ENCODE measurements at regions of chr1 and their contacts with region 1.

Region 1: DNA sequence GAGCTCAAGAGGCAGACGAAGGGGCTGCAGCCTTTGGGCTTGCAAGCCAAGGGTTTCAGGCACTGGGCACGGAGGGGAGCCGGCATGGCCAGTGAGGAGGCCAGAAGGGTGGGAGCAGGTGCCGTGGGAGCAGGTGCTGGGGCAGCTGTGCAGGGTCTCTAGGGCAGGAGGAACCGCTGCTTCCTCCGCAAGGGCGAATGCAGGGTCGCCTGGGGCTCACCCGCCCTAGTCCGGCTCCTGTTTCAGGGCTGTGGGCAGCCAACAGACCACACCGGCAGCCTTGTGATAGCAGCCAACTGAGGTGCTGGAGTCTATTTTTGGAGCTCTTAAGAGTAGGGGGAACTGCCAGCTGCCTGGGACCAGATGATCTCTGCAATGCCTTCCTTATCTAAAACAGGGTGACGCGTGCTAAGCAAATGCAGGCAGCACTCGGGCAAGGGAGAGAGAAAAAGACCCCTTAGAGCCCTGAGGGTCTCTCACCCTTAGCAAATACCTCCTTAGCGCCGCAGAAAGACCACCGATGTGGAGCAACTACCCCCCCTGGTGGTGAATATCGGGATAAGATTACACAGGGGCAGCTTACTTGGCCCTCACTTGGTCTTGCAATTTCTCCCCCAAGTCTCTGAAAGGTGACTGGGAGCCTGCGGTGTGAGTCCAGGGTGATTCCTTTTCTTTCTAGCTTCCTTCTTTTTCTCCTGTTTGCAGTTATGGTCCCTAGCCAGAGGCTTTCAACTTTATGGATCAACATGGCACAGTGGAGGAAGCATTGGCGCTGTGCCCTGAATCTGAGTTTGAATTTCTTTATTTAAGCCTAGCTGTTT is 20.7 kb upstream of the MAPKAPK2 start:
- DNase-seq: peak; percentile 79
- ATAC-seq: peak; percentile 81
- H3K4me3 Mint-ChIP-seq: no peak overlapping the region
- H3K27ac Mint-ChIP-seq: no peak overlapping the region
- H3K4me1 Mint-ChIP-seq: peaks cover 28% of the 10 kb centered on the region
- H3K27me3 Mint-ChIP-seq: peaks cover 32% of the 10 kb centered on the region

Region 2: GRCh38 chr1:206479183-206480125 is 184.6 kb before region 1 on chr1:
- CTCF ChIA-PET with region 1: interaction called, 33 read pairs
- DNase-seq: peak; percentile 80
- ATAC-seq: peak; percentile 72
- H3K4me3 Mint-ChIP-seq: no peak overlapping the region
- H3K27ac Mint-ChIP-seq: peak overlapping the region; percentile 61
- H3K4me1 Mint-ChIP-seq: peaks cover 17% of the 10 kb centered on the region
- H3K27me3 Mint-ChIP-seq: no peaks in the 10 kb centered on the region

Region 3: DNA sequence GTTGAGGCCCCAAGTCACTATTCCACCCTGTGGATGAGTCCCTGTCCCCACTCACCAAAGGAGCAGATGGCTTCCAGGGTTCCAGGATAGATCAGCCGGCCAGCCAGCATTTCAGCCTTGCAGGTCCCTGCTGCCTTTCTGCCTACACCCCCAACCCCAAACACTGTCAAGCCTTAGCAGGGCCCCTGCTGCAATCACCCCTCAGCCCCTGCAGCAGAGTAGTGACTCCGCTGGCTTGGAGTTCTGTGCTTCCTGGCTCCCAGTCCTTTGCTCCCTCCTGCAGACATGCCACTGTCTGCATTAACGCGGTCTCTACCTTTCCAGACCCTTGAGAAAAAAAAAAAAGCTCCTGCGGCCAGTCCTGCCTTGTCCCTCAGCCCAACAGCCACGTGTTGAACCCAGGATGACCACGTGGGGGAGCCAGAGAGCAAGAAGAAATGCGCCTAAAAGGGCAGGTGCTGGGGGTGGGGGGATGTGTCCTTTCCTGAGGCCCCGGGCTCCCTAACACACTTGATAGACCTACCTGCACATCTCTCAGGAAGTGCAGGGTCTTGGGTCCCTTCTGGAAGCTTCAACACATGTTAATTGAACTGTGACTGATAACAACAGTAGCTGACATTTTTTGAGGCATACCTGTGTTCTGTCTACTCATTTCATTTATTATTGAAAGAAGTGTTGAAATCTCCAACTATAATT is 119.3 kb before region 1 on chr1:
- CTCF ChIA-PET with region 1: interaction called, 30 read pairs
- DNase-seq: peak; percentile 86
- ATAC-seq: peak; percentile 92
- H3K4me3 Mint-ChIP-seq: no peak overlapping the region
- H3K27ac Mint-ChIP-seq: peak overlapping the region; percentile 28
- H3K4me1 Mint-ChIP-seq: peaks cover 13% of the 10 kb centered on the region
- H3K27me3 Mint-ChIP-seq: no peaks in the 10 kb centered on the region

Region 4: DNA sequence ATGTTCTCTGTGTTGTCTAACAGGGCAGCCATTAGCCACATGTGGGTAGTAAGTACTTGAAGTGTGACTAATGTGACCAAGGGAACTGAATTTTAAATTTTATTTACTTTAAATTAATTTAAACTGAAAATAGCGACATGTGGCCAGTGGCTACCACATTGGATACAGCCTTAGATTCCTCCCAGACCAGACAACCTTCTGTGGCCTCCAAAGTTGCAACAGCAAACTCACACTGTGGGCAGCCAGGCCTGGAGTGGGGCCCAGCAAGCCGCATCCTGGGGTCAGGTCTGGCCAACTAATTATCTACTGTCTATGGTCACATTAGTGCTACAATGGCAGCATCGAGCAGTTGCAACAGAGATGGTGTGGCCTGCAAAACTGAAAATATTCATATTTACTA is 63.5 kb before region 1 on chr1:
- CTCF ChIA-PET with region 1: interaction called, 11 read pairs
- DNase-seq: no peak
- ATAC-seq: no peak
- H3K4me3 Mint-ChIP-seq: no peak overlapping the region
- H3K27ac Mint-ChIP-seq: no peak overlapping the region
- H3K4me1 Mint-ChIP-seq: peaks cover 1% of the 10 kb centered on the region
- H3K27me3 Mint-ChIP-seq: no peaks in the 10 kb centered on the region

Region 5: GRCh38 chr1:206674745-206675175 is 10.7 kb after region 1 on chr1:
- CTCF ChIA-PET with region 1: interaction called, 134 read pairs
- DNase-seq: no peak
- ATAC-seq: no peak
- H3K4me3 Mint-ChIP-seq: no peak overlapping the region
- H3K27ac Mint-ChIP-seq: no peak overlapping the region
- H3K4me1 Mint-ChIP-seq: peaks cover 8% of the 10 kb centered on the region
- H3K27me3 Mint-ChIP-seq: peaks cover 7% of the 10 kb centered on the region

Region 6: DNA sequence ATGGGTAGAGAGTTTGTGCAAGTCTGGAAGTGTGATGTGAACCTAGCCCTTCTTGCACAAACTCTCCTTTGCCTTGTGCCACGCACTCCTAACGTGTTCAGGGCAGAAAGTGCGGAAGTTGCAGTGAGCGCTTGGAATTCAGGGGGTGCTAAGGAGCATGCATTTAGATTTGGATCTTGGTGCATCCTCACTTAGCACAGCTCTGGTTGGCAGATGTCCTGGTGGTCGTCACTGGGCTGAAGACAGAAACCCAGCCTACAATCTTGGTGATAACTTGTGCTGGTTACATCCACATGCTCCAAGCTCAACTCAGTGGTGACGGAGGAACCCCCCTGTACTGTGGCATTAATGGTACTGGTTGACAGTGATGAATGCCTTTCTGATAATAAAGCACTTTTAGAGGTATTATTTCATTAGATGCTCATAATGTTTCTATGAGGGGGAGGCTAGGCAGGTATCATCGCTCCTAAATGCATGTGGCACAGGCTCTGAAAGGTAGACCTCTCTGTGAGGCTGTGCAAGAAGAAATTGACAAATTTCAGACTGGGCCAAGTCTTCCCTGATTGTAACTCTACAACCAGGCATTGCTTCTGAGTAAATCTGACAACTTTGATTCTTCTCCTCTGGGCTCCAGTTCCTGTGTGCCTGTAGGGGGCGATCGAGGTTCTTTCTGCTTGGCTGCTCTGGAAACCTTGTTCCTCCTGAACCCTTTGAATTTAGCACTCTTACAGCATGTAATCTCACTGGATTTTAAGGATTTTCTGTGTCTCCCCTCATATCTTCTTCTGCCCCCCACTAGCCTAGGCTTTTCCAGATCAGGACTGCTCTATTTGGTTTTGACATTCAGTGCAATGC is 61.3 kb after region 1 on chr1:
- CTCF ChIA-PET with region 1: interaction called, 16 read pairs
- DNase-seq: peak; percentile 77
- ATAC-seq: peak; percentile 65
- H3K4me3 Mint-ChIP-seq: no peak overlapping the region
- H3K27ac Mint-ChIP-seq: peak overlapping the region; percentile 24
- H3K4me1 Mint-ChIP-seq: peaks cover 59% of the 10 kb centered on the region
- H3K27me3 Mint-ChIP-seq: no peaks in the 10 kb centered on the region